Left colon (tissue), 2 donors: ENCODE measurements at regions of chr4 and their contacts with region 1.

Region 1: GRCh38 chr4:174318829-174319764 is 35.4 kb downstream of the CEP44 start:
- DNase-seq: no peak
- ATAC-seq: no peak

Region 2: DNA sequence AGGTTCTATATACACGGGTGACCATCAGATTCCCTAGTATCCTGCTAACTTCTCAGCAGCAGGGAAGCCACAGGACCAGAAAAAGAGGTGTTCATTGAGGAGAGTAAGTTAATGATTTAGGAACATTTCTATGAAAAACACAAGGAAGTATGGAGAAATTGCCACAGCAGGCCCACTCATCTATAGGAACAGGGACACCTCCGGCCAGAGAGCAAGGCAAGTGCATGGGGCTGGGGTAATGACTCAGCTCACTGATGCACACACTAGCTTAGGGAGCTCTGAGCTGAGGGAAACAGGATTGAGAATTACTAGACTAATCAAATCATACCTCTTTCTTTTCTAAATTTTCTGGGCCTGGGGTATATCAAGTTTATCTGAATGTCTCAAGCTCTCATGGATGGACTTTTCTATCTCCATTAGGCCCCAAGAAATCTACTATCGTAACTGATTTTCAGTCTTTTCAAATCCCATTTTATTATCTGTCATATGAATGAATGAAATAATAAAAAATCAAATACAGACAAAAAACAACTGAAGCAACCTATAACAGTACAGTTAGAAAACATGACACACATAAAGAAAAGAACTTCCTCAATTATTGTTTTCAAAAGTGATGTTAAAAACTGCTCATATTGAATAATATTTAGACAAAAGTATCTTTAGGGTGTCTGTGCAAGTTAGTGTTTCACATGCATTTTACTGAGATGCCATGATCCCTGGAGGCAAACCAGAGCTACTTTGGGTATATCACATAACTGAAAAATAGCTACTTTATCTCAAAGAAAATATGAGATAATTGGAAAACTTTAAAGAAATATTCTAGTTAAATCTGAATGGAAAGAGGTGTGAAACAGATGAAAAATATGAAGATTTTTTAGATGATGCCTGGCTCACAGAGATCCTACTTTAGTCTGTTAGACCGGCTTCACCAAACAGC is 125.4 kb before region 1 on chr4:
- intact Hi-C with region 1: no loop called
- DNase-seq: no peak
- ATAC-seq: no peak

Region 3: GRCh38 chr4:174217273-174218126 is 101.6 kb before region 1 on chr4:
- intact Hi-C with region 1: loop called in 1 of 2 experiments (anchors 10 kb)
- DNase-seq: no peak
- ATAC-seq: peak; percentile 55

Region 4: DNA sequence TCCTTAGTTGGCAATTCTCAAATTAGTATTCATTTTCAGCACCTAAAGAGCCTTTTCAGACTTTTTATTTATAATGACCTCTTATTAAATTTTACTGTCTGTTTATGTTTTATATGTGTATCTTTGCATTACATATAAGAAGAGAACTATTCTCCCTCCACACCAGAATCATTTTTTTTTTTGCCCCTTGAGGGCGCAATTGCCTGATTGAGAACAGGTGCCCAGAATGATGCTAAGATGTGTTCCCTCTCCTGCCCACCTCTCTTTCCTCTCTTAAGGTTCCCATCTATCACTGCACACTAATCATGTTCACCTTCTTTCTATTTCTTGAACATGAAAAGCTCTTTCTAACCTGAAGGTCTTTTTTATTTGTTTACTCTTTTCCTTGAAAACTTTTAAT is 554.8 kb after region 1 on chr4:
- intact Hi-C with region 1: no loop called
- DNase-seq: no peak
- ATAC-seq: no peak